PC-9 (cell line): ENCODE measurements at regions of chrX and their contacts with region 1.

Region 1: DNA sequence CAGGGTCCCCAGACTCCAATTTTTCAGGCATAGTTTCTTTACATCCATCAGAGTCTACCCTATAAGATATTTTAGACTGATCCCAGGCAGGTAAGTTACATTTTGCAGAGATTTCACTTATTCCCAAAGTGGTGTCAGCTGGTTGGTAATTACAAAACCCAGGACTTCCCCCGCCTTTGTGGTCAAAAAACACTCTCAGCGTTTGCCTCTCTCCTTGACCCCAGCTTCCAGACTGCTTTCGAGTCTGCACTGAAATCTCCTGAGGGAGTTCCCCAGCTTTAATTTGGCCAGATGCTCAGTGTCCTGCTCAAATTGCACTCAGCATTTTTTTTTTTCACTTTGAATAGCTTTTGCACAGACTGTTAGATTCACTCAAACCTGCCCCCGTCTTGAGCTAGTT is 11.2 kb upstream of the AMOT start:
- DNase-seq: peak; percentile 45 to 66
- H3K4me3 ChIP-seq: no peak overlapping the region; the same call in 1 of the 2 replicates
- H3K27ac ChIP-seq: peak overlapping the region; percentile 58
- H3K4me1 ChIP-seq: peaks cover 36% of the 10 kb centered on the region
- H3K27me3 ChIP-seq: no peaks in the 10 kb centered on the region
- CTCF ChIP-seq: no peak

Region 2: GRCh38 chrX:112738347-112739033 is 113.3 kb before region 1 on chrX:
- CTCF ChIA-PET with region 1: no interaction called
- POLR2A ChIA-PET with region 1: no interaction called
- intact Hi-C with region 1: loop called (anchors 5 kb)
- DNase-seq: no peak
- H3K4me3 ChIP-seq: no peak overlapping the region
- H3K27ac ChIP-seq: no peak overlapping the region
- H3K4me1 ChIP-seq: no peaks in the 10 kb centered on the region
- H3K27me3 ChIP-seq: no peaks in the 10 kb centered on the region
- CTCF ChIP-seq: no peak

Region 3: GRCh38 chrX:112760697-112761096 is 91.1 kb before region 1 on chrX:
- CTCF ChIA-PET with region 1: no interaction called
- POLR2A ChIA-PET with region 1: no interaction called
- intact Hi-C with region 1: loop called (anchors 10 kb)
- DNase-seq: no peak
- H3K4me3 ChIP-seq: no peak overlapping the region
- H3K27ac ChIP-seq: no peak overlapping the region
- H3K4me1 ChIP-seq: no peaks in the 10 kb centered on the region
- H3K27me3 ChIP-seq: no peaks in the 10 kb centered on the region
- CTCF ChIP-seq: peak; percentile 33; the same call in 1 of the 2 replicates

Region 4: GRCh38 chrX:112819010-112819640 is 32.7 kb before region 1 on chrX:
- CTCF ChIA-PET with region 1: no interaction called
- POLR2A ChIA-PET with region 1: interaction called, 6 read pairs
- intact Hi-C with region 1: loop called (anchors 2 kb)
- DNase-seq: peak; percentile 49 to 84
- H3K4me3 ChIP-seq: peak overlapping the region; percentile 35; the same call in 1 of the 2 replicates
- H3K27ac ChIP-seq: peak overlapping the region; percentile 86
- H3K4me1 ChIP-seq: peaks cover 43% of the 10 kb centered on the region
- H3K27me3 ChIP-seq: no peaks in the 10 kb centered on the region
- CTCF ChIP-seq: no peak

Region 5: GRCh38 chrX:112832481-112833100 is 19.2 kb before region 1 on chrX:
- CTCF ChIA-PET with region 1: interaction called, 3 read pairs
- POLR2A ChIA-PET with region 1: interaction called, 4 read pairs
- intact Hi-C with region 1: loop called (anchors 1 kb)
- DNase-seq: peak; percentile 89 to 96
- H3K4me3 ChIP-seq: peak overlapping the region; percentile 30; the same call in 1 of the 2 replicates
- H3K27ac ChIP-seq: peak overlapping the region; percentile 74
- H3K4me1 ChIP-seq: peaks cover 53% of the 10 kb centered on the region
- H3K27me3 ChIP-seq: no peaks in the 10 kb centered on the region
- CTCF ChIP-seq: no peak

Region 6: DNA sequence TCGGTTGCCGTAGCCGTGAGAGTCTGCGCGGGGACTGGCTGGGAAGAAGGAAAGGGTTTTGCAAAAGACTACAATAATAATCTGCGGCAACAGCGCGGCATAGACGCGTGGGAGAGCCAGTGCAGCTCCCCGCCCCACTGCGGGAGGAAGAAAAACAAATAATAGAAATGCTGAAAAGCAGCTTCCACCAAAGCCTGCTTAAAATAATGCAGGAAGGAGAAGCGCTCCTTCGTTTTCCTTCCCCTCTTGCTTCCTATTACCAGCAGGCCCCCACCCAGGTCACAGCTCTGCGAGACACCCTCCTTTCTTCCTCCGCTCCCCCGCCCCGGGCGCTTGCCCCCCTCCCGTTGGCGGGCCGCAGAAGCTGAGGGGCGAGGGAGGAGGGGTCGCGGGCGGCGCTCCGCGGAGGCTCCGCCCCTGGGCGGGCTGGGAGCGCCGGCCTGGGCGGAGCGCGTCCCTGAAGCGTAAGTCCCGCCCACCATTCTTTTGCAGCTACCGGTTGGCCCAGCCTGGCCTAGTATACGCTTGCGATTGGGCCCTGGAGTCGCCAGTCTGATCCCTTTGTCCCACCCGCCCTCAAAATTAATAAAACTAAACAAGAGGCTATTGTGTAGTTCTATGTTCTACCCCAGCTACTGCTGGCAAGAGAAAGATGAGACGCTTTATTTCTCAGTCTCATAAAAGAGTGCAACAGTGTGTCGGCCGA is 10.5 kb before region 1 on chrX:
- CTCF ChIA-PET with region 1: interaction called, 6 read pairs
- POLR2A ChIA-PET with region 1: interaction called, 8 read pairs
- intact Hi-C with region 1: loop called (anchors 1 kb)
- DNase-seq: peak; percentile 85 to 91
- H3K4me3 ChIP-seq: peak overlapping the region; percentile 85
- H3K27ac ChIP-seq: peak overlapping the region; percentile 48; the same call in 1 of the 2 replicates
- H3K4me1 ChIP-seq: peaks cover 34% of the 10 kb centered on the region
- H3K27me3 ChIP-seq: no peaks in the 10 kb centered on the region
- CTCF ChIP-seq: no peak

Region 7: GRCh38 chrX:112867570-112867969 is 15.8 kb after region 1 on chrX:
- CTCF ChIA-PET with region 1: no interaction called
- POLR2A ChIA-PET with region 1: no interaction called
- intact Hi-C with region 1: no loop called
- DNase-seq: peak in 1 of 2 experiments; percentile 43
- H3K4me3 ChIP-seq: no peak overlapping the region
- H3K27ac ChIP-seq: no peak overlapping the region
- H3K4me1 ChIP-seq: peaks cover 12% of the 10 kb centered on the region
- H3K27me3 ChIP-seq: no peaks in the 10 kb centered on the region
- CTCF ChIP-seq: peak; percentile 42; the same call in 1 of the 2 replicates

Region 8: DNA sequence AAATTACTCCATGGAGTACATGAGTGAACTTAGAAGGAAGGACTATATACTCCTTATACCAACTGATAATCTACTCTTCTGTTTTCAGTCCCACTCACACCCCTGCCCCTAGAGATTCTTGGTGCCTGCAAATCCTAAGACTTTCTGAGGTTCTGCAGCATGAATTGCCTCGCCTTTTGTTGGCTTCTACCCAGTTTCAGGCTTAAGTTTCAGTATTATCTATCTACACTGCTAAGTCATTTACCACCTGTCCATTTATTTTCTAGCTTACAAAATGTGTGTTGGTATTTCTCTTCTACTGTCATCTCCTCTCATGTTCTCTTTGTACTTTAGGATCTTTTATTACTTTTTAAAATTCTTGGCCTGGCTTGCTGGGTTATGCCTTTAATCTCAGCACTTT is 83.2 kb after region 1 on chrX:
- CTCF ChIA-PET with region 1: no interaction called
- POLR2A ChIA-PET with region 1: no interaction called
- intact Hi-C with region 1: no loop called
- DNase-seq: no peak
- H3K4me3 ChIP-seq: no peak overlapping the region
- H3K27ac ChIP-seq: no peak overlapping the region
- H3K4me1 ChIP-seq: no peaks in the 10 kb centered on the region
- H3K27me3 ChIP-seq: no peaks in the 10 kb centered on the region
- CTCF ChIP-seq: no peak

Region 9: GRCh38 chrX:112967326-112967725 is 115.5 kb after region 1 on chrX:
- CTCF ChIA-PET with region 1: no interaction called
- POLR2A ChIA-PET with region 1: interaction called, 4 read pairs
- intact Hi-C with region 1: loop called (anchors 1 kb)
- DNase-seq: peak; percentile 47 to 98
- H3K4me3 ChIP-seq: peak overlapping the region; percentile 38; the same call in 1 of the 2 replicates
- H3K27ac ChIP-seq: peak overlapping the region; percentile 99
- H3K4me1 ChIP-seq: peaks cover 54% of the 10 kb centered on the region
- H3K27me3 ChIP-seq: no peaks in the 10 kb centered on the region
- CTCF ChIP-seq: no peak

Region 10: DNA sequence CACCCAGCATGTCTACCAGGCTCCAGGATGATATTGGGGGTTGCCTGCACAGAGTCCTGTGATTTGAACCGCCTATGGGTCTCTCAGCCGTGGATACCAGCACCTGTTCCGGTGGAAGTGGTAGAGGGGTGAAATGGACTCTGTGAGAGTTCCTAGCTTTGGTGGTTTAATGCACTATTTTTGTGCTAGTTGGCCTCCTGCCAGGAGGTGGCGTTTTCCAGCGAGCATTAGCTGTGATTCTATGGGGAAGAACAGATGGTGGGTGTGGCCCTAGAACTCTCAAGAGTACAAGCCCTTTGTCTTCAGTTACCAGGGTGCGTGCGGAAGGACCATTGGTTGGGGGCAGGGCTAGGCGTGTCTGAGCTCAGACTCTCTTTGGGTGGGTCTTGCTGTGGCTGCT is 305.7 kb after region 1 on chrX:
- CTCF ChIA-PET with region 1: no interaction called
- POLR2A ChIA-PET with region 1: no interaction called
- intact Hi-C with region 1: no loop called
- DNase-seq: no peak
- H3K4me3 ChIP-seq: no peak overlapping the region
- H3K27ac ChIP-seq: no peak overlapping the region
- H3K4me1 ChIP-seq: no peaks in the 10 kb centered on the region
- H3K27me3 ChIP-seq: no peaks in the 10 kb centered on the region
- CTCF ChIP-seq: no peak